ENCODE measurements at regions of chr12 and their contacts with region 1.

Region 1: DNA sequence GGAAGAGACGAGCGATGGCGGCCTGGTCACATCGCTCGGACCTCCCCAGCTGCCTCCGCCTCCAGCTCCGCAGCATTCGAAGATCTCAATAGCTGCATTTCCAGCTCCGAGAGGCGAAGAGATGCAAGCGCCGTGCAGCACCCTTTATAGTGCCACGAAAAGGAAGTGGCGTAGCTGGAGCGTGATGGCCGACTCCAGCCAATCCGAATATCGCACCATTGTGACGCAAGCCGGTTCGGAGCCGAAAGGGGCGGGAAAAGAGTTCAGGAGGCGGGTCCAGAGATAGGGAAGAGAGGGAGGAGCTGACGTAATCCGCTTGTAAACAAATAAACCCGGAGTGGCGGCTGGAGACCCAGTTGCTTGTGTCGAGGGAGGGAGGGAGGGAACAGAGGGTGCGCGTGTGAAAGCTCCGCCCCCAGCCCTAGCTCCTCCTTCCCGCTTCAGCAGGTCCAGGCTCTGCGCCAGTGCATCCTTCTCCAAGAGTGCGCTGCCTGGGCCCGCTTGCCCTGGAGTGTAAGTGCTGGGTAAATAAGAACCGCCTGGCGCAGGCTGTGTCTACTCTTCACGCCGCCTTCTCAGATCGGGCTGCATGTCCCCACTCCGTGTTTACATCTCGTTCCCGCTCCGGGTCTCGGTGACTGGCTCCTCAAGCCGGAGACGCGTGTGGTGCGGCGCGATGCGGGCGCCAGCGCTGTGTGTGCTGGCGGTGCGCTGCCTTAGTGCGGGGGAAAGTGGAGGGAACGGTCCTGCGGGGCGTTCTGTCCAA is at the start of gene BTG1:
- DNase-seq: peak; percentile 98
- H3K4me3 ChIP-seq: peak within 1 kb of the TSS; percentile 97
- H3K27ac ChIP-seq: peak within 1 kb of the TSS; percentile 98
- H3K4me1 ChIP-seq: peaks cover 60% of the 10 kb centered on the region
- H3K27me3 ChIP-seq: no peaks in the 10 kb centered on the region
- CTCF ChIP-seq: no peak
- total RNA-seq, gene BTG1: 79.4 TPM

Region 2: GRCh38 chr12:91811481-91812287 is 334.2 kb before region 1 on chr12:
- intact Hi-C with region 1: loop called (anchors 5 kb)
- DNase-seq: peak; percentile 73
- H3K4me3 ChIP-seq: no peak overlapping the region
- H3K27ac ChIP-seq: no peak overlapping the region
- H3K4me1 ChIP-seq: no peaks in the 10 kb centered on the region
- H3K27me3 ChIP-seq: no peaks in the 10 kb centered on the region
- CTCF ChIP-seq: peak; percentile 84

Region 3: DNA sequence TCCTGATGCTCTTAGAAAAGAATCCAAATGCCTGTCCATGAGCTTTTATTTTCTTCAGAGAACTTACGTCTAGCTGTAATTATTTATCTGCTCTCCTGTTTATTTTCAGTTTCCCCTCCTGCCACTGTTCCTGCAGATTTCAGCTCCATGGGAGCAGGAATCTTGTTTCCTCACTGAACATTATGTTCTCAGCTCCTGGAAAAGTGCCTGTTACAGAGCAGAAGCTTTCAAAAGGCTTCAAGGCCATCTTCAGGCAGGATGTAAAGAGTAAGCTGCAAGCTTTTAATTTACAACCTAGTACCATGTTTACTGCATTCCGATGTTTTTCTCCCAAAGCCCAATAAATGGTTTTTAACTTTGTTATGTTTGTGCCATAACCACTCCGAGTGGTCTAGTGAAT is 98.1 kb after region 1 on chr12:
- intact Hi-C with region 1: loop called (anchors 5 kb)
- DNase-seq: no peak
- H3K4me3 ChIP-seq: peak overlapping the region; percentile 17
- H3K27ac ChIP-seq: peak overlapping the region; percentile 91
- H3K4me1 ChIP-seq: peaks cover 34% of the 10 kb centered on the region
- H3K27me3 ChIP-seq: no peaks in the 10 kb centered on the region
- CTCF ChIP-seq: peak; percentile 42

Measured in left ventricle myocardium inferior (tissue), 1 donor.